Vagina (tissue), 2 donors: ENCODE measurements at regions of chrX and their contacts with region 1.

Region 1: DNA sequence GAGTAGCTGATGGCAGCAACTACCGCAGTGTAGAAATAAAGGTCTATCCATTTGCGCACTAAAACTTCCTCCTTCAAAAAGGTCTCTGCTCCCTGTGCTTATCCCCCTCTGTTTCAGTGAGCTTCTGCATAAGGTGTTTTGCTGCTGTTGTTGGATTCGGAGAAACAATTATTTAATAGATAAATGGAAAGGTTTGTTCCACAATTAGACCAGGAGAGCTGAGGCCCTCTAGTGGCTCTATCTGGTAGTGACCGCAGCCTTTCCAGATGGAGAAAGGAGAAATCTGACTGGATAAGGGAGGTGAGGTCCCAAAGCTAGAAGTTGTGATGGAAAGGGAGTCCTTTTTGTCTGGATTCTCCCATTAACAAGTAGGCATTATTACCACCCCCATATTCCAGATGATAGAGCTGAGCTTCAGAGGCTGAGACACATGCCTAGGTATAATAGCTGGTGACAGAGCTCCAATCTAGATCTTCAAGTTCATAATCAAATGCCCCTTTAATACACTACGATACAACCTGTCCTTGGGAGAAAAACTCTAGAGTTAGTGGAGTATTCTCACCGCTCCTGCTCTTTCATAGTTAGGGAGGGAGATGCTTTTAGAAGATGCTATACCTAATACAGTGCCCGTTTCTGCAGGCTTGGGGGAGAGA is 5.1 kb upstream of the GABRQ start:
- DNase-seq: peak; percentile 6 to 52
- H3K4me3 ChIP-seq: no peak overlapping the region
- H3K27ac ChIP-seq: no peak overlapping the region
- H3K4me1 ChIP-seq: no peaks in the 10 kb centered on the region
- H3K27me3 ChIP-seq: no peaks in the 10 kb centered on the region
- CTCF ChIP-seq: peak; percentile 52 to 62 (median 53)
- POLR2A ChIP-seq: no peak

Region 2: GRCh38 chrX:151754641-151755215 is 877.8 kb before region 1 on chrX:
- intact Hi-C with region 1: loop called (anchors 5 kb)
- DNase-seq: no peak
- H3K4me3 ChIP-seq: no peak overlapping the region
- H3K27ac ChIP-seq: no peak overlapping the region
- H3K4me1 ChIP-seq: peaks cover 9% of the 10 kb centered on the region
- H3K27me3 ChIP-seq: no peaks in the 10 kb centered on the region
- CTCF ChIP-seq: no peak
- POLR2A ChIP-seq: no peak